Ascending aorta (tissue), 2 donors: ENCODE measurements at regions of chr15 and their contacts with region 1.

Region 1: GRCh38 chr15:84840741-84841429 is 23.7 kb downstream of the ALPK3 start:
- DNase-seq: peak; percentile 83 to 96
- H3K4me3 ChIP-seq: peak overlapping the region in 1 of 2 donors; percentile 9
- H3K27ac ChIP-seq: peak overlapping the region; percentile 97
- H3K4me1 ChIP-seq: peaks cover 16 to 46% of the 10 kb centered on the region in 2 donors
- H3K27me3 ChIP-seq: no peaks in the 10 kb centered on the region
- CTCF ChIP-seq: no peak

Region 2: GRCh38 chr15:84863565-84864443 is 22.9 kb after region 1 on chr15:
- intact Hi-C with region 1: loop called (anchors 2 kb)
- DNase-seq: peak in 1 of 2 donors; percentile 64
- H3K4me3 ChIP-seq: peak overlapping the region in 1 of 2 donors; percentile 17
- H3K27ac ChIP-seq: peak overlapping the region; percentile 4 to 44
- H3K4me1 ChIP-seq: peaks cover 6 to 16% of the 10 kb centered on the region in 2 donors
- H3K27me3 ChIP-seq: no peaks in the 10 kb centered on the region
- CTCF ChIP-seq: peak; percentile 29 to 66 (median 37)

Region 3: GRCh38 chr15:84898761-84899160 is 57.9 kb after region 1 on chr15:
- intact Hi-C with region 1: no loop called
- DNase-seq: no peak
- H3K4me3 ChIP-seq: no peak overlapping the region
- H3K27ac ChIP-seq: no peak overlapping the region
- H3K4me1 ChIP-seq: peaks cover 2% of the 10 kb centered on the region in 2 donors
- H3K27me3 ChIP-seq: no peaks in the 10 kb centered on the region
- CTCF ChIP-seq: no peak

Region 4: DNA sequence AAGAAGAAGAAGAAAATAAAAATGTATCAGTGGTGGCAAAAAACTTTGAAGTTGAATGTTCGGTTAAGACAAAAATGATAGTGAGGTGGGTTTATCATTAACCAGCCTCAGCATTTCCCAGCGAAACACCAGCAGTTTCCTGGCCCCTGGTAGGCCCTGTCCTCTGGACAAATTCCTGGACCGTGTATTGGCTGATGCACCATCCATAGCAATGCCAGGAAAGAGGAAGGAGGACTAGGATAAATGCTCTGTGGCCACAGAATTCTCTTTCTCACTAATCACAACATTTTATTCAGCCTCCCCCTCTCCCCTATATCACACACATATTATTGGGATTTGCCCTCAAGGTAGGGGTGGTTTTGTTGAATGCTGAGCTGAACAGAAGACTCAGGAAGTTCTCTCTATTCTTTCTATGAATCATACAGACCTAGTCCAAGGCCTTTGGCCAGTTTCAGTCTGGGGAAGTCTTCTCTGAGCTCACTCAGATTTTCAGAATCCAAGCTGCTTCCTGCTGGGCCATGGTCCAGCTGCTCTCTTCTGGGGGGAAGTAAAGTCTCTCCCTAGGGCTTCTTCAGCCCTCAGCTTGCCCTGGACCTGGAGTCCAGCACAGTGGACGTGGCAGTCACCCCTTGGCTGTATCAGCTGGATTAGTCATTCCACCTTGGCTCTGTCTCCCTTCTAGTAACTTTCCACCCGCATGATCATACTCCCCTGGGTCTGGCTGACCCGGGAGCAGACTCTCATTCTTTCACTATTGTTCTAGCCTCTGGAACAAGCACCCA is 71.2 kb after region 1 on chr15:
- intact Hi-C with region 1: loop called (anchors 2 kb)
- DNase-seq: peak; percentile 89 to 98
- H3K4me3 ChIP-seq: no peak overlapping the region
- H3K27ac ChIP-seq: peak overlapping the region; percentile 83 to 98
- H3K4me1 ChIP-seq: peaks cover 32 to 56% of the 10 kb centered on the region in 2 donors
- H3K27me3 ChIP-seq: no peaks in the 10 kb centered on the region
- CTCF ChIP-seq: no peak